ENCODE measurements at regions of chr11 and their contacts with region 1.

Region 1: GRCh38 chr11:72080256-72080974 is at the starts of genes LRRC51 and NUMA1:
- DNase-seq: peak; percentile 98 to 100 (median 99)

Region 2: GRCh38 chr11:72040726-72041441 is 39.5 kb before region 1 on chr11:
- intact Hi-C with region 1: loop called (anchors 2 kb)
- DNase-seq: peak; percentile 86 to 97 (median 93)

Region 3: GRCh38 chr11:72102946-72103753 is 22.7 kb after region 1 on chr11 and contains the start of gene LAMTOR1:
- intact Hi-C with region 1: loop called (anchors 2 kb)
- DNase-seq: peak; percentile 93 to 100 (median 98)